Activated naive CD4-positive, alpha-beta T cell treated with anti-CD3 and anti-CD28 coated beads for 36 hours (primary cell): ENCODE measurements at regions of chr17 and their contacts with region 1.

Region 1: GRCh38 chr17:81683584-81684237 is at the starts of genes ARL16 and HGS:
- DNase-seq: peak; percentile 98
- H3K4me3 Mint-ChIP-seq: peak within 1 kb of the TSS; percentile 87
- H3K27ac Mint-ChIP-seq: peak within 1 kb of the TSS; percentile 70
- H3K4me1 Mint-ChIP-seq: peaks cover 37% of the 10 kb centered on the region
- H3K27me3 Mint-ChIP-seq: no peaks in the 10 kb centered on the region
- total RNA-seq, gene ARL16: 13.8 to 14.1 TPM
- total RNA-seq, gene HGS: 87.1 to 109 TPM

Region 2: DNA sequence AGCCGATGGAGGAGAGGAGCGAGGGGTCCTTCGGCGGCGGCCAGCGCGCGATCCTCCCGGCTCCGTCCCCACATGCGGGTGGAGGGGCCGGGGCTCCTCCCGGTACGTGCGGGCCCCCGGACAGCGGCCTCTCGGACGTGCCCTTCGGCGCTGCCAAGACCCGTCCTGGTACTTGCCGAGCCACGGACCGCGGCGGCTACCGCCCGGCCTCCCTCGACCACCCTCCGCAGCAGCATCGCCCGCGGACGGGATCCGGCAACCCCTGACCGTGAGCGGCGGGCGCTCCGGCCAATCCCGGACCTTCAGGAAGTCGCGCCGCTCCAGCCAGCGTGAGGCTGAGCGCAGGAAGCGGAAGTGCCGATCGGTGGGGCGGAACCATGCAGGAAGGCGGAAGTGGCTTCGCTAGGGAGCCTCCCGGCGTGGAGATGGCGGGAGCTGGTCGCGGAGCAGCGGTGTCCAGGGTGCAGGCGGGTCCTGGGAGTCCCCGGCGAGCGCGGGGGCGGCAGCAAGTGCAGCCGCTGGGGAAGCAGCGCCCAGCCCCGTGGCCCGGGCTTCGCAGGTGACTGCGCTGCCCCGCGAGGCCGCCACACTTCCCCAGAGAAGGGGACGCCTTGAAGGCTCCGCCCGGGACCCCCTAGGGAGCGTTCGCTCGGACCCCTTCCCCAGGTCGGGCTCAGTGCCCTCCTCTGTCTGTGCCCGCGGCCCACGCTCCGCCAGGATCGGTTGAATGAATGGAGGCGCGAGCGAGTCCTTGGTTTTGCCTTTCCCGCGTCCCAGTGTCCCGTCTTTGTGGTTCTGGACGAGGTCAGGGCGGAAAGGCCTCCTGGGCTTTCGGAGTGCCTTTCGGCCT is 17.1 kb before region 1 on chr17 and contains the starts of genes CCDC137 and OXLD1:
- CTCF ChIA-PET with region 1: interaction called, 4 read pairs
- intact Hi-C with region 1: loop called (anchors 2 kb)
- DNase-seq: peak; percentile 97
- H3K4me3 Mint-ChIP-seq: peak within 1 kb of the TSS; percentile 99
- H3K27ac Mint-ChIP-seq: peak within 1 kb of the TSS; percentile 96
- H3K4me1 Mint-ChIP-seq: peaks cover 52% of the 10 kb centered on the region
- H3K27me3 Mint-ChIP-seq: no peaks in the 10 kb centered on the region
- total RNA-seq, gene CCDC137: 30.8 to 32.3 TPM
- total RNA-seq, gene OXLD1: 41.9 to 44.1 TPM

Region 3: DNA sequence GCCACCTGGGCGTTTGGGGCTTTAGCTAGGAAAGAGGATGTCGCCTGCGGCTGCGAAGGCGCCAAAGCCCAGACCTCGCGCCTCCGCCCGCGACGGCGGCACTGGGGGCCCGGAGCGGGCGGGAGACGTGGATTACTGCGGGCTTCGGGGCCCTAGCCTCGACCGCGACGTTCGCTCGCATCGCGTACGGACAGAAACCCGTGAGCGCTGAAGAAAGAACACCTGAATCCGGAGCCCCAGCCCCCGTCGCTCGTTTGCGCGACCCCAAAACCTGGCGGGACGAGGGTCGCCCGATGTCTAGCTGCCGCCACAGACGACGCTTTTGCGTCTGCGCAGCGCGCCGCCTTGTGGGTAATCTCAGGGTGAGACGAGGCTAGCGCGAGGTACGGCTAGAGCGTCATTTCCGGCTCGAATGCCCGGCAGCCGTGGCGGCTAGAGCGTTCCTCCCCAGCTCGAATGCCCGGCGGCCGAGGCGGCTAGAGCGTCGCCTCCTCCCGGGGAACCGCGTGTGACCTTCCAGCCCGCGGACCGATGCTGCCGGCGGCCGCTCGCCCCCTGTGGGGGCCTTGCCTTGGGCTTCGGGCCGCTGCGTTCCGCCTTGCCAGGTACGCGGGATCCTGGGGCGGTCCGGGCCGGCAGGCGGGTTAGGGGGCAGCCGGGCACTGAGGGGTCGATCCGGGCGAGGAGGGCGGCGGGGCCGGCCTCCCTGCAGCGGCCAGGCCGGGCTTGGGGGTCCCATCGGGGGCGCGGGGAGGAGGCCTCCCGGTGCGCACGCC is 19.4 kb after region 1 on chr17 and contains the start of gene MRPL12:
- CTCF ChIA-PET with region 1: interaction called, 3 read pairs
- intact Hi-C with region 1: loop called (anchors 1 kb)
- DNase-seq: peak; percentile 91
- H3K4me3 Mint-ChIP-seq: peak within 1 kb of the TSS; percentile 95
- H3K27ac Mint-ChIP-seq: peak within 1 kb of the TSS; percentile 88
- H3K4me1 Mint-ChIP-seq: peaks cover 38% of the 10 kb centered on the region
- H3K27me3 Mint-ChIP-seq: no peaks in the 10 kb centered on the region
- total RNA-seq, gene MRPL12: 97.7 to 102 TPM

Region 4: DNA sequence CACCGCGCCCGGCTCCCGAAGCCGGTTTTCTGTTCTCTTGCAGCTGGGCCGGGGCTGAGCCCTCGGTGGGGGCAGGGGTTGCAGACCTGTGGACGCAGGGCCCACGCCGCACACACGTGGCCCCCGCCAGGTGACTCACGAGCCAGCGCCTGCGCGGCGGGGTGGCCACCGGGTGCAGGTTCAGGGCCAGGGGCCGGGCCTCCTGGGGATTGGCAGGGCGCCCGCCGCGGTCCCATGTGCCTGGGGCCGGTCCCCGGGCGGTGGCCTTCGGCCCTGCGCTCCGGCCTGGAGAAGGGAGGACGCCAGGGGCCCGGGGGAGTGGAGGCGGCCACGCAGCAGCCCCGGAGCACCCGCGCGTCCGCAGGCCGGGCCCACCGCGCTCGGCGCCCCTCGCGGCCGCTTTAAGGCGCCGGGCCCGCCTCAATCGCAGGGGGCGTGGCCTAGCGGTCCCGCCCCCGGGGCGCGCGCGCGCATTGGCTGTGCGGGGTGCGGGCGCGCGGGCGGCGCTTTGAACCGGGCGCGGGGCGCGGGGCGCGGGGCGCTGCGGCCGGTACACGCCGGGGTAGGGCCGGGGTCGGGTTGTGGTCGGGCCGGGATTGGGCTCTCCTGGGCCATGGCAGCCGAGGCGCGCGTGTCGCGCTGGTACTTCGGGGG is 28.2 kb after region 1 on chr17 and contains the start of gene SLC25A10:
- CTCF ChIA-PET with region 1: interaction called, 4 read pairs
- intact Hi-C with region 1: loop called (anchors 1 kb)
- DNase-seq: peak; percentile 83
- H3K4me3 Mint-ChIP-seq: peak within 1 kb of the TSS; percentile 79
- H3K27ac Mint-ChIP-seq: peak within 1 kb of the TSS; percentile 71
- H3K4me1 Mint-ChIP-seq: peaks cover 32% of the 10 kb centered on the region
- H3K27me3 Mint-ChIP-seq: no peaks in the 10 kb centered on the region
- total RNA-seq, gene SLC25A10: 16.9 to 18.0 TPM

Region 5: DNA sequence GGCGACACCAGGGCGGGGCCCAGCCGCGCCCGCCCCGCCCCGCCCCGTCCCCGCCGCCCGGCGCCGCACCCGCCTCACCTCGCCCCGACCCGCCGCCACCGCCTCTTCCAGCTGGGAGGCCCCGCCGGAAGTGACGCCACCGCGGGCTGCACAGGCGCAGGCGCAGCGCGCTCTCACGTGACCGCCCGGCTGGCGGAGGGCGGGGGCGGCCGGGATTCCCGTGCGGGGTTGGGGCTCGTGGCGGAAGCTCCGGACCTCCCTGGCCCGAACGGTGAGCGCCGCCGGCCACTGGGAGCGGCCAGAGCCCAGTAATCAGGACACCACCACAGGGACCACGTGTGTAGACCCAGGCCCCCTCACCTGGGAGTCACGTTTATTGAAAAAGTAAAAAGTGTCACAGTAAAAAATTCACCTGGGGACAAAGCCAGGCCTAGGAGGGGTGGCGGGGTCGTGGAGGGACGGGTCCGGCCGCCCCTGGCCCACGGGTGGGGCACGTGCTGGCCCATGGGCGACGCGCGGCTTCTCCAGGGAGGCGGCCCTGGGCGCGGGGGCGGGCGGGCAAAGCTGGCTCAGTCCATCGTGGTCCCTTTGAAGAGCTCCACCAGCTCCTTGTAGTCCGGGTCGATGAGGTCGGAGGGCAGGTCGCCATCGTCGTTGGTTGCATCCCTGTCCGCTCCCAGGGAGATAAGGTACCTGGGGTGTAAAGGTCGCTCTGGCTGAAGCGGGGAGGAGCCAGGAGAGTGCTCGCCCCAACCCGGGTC is 149.6 kb after region 1 on chr17 and contains the start of gene MCRIP1:
- CTCF ChIA-PET with region 1: no interaction called
- intact Hi-C with region 1: loop called (anchors 2 kb)
- DNase-seq: peak; percentile 95
- H3K4me3 Mint-ChIP-seq: peak within 1 kb of the TSS; percentile 95
- H3K27ac Mint-ChIP-seq: peak within 1 kb of the TSS; percentile 88
- H3K4me1 Mint-ChIP-seq: peaks cover 16% of the 10 kb centered on the region
- H3K27me3 Mint-ChIP-seq: no peaks in the 10 kb centered on the region
- total RNA-seq, gene MCRIP1: 53.7 to 55.6 TPM